MCF 10A (cell line): ENCODE measurements at regions of chr6 and their contacts with region 1.

Region 1: DNA sequence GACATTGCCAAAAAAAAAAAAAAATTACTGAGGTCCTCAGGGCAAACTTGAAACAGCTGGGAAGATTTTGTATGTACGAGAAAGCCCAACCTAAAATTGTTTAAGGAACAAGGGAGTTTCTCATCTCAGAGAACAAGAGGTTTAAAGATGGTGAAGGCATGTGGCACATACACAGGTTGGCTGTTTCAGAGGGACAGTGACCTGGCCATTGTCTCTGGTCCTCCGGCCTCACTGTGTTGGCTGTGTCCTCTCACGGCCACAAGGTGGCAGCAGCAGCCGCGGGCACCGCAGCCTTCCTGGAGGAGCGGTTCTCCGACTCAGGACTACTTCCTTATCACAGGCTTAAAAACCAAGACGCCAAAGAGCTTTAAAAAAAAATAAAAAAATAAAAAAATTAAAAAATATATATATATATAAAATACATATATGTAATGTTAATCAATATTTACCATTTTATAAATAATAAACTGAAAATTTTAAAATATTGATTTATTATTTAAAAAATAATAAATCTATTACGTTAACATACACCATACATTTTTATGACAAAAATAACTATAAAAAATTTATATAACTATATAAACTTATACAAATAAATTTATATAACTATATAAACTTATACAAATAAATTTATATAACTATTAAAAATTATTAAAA is 52.8 kb downstream of the GTF2H5 start:
- DNase-seq: peak; percentile 80
- H3K4me3 Mint-ChIP-seq: no peak overlapping the region
- H3K27ac Mint-ChIP-seq: no peak overlapping the region
- H3K4me1 Mint-ChIP-seq: peaks cover 9% of the 10 kb centered on the region
- H3K27me3 Mint-ChIP-seq: no peaks in the 10 kb centered on the region
- CTCF ChIP-seq: peak; percentile 91

Region 2: DNA sequence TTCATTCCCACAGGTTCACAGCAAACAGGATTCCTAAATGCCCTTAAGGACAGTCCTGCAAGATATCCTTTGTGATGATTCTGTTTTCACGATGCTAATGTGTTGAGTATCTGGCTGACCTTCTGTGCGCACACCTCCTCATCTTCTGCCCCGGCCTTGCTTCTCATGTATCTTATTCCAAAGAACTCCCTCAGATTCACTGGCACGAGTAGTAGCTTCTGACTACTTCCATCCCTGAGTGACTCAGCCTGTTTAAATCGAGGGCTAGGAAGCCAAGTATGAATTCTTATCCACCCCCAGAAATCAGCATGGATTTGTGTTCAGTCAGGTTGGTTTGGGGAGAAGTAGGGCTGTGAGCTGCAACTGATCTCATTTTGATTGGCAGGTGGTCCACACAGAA is 588.1 kb before region 1 on chr6:
- CTCF ChIA-PET with region 1: no interaction called
- POLR2A ChIA-PET with region 1: no interaction called
- intact Hi-C with region 1: no loop called
- DNase-seq: no peak
- H3K4me3 Mint-ChIP-seq: no peak overlapping the region
- H3K27ac Mint-ChIP-seq: no peak overlapping the region
- H3K4me1 Mint-ChIP-seq: no peaks in the 10 kb centered on the region
- H3K27me3 Mint-ChIP-seq: no peaks in the 10 kb centered on the region
- CTCF ChIP-seq: no peak

Region 3: GRCh38 chr6:157693867-157694266 is 527.0 kb before region 1 on chr6:
- CTCF ChIA-PET with region 1: no interaction called
- POLR2A ChIA-PET with region 1: no interaction called
- intact Hi-C with region 1: no loop called
- DNase-seq: no peak
- H3K4me3 Mint-ChIP-seq: no peak overlapping the region
- H3K27ac Mint-ChIP-seq: no peak overlapping the region
- H3K4me1 Mint-ChIP-seq: peaks cover 10% of the 10 kb centered on the region
- H3K27me3 Mint-ChIP-seq: no peaks in the 10 kb centered on the region
- CTCF ChIP-seq: no peak

Region 4: DNA sequence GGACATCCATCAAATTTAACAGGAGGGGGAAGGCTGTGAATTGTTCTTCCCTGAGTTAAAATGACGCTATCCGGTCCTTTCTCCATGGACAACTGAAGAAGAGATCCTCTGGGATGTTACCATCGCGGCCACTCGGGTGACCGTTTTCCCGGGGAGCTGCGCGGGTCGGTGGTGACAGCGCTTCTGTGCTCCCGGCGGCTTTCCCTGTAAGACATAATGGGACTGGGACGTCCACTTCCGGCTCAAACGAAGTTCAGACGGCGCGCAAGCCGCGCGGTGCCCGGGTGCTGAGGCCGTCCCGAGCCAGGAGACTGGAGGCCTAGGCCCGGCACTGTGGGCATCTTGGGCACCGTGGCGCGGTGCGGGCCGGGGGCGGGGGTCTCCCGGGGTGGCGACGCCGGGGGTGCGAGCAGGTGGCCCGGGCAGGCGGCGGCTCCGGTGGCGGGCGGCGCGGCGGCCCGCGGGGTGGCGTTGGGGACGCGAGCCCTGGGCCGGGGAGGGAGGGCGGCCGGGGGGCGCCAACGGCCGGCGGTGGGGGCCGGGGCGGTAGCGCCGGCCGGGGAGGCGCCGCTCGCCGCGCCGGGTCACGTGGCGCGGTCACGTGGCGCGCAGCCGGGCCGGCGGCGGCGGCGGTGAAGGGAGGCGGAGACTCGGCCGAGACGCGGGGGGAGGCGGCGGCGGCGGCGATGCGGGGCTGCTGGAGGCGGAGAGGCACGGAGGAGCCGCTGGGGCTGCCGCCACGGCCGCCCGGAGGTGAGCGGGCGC is 10.8 kb after region 1 on chr6:
- CTCF ChIA-PET with region 1: interaction called, 10 read pairs
- POLR2A ChIA-PET with region 1: interaction called, 9 read pairs
- intact Hi-C with region 1: no loop called
- DNase-seq: peak; percentile 55
- H3K4me3 Mint-ChIP-seq: peak overlapping the region; percentile 88
- H3K27ac Mint-ChIP-seq: peak overlapping the region; percentile 63
- H3K4me1 Mint-ChIP-seq: peaks cover 25% of the 10 kb centered on the region
- H3K27me3 Mint-ChIP-seq: no peaks in the 10 kb centered on the region
- CTCF ChIP-seq: no peak

Region 5: GRCh38 chr6:158255275-158255988 is 34.5 kb after region 1 on chr6:
- CTCF ChIA-PET with region 1: no interaction called
- POLR2A ChIA-PET with region 1: no interaction called
- intact Hi-C with region 1: no loop called
- DNase-seq: no peak
- H3K4me3 Mint-ChIP-seq: no peak overlapping the region
- H3K27ac Mint-ChIP-seq: no peak overlapping the region
- H3K4me1 Mint-ChIP-seq: peaks cover 15% of the 10 kb centered on the region
- H3K27me3 Mint-ChIP-seq: no peaks in the 10 kb centered on the region
- CTCF ChIP-seq: no peak

Region 6: DNA sequence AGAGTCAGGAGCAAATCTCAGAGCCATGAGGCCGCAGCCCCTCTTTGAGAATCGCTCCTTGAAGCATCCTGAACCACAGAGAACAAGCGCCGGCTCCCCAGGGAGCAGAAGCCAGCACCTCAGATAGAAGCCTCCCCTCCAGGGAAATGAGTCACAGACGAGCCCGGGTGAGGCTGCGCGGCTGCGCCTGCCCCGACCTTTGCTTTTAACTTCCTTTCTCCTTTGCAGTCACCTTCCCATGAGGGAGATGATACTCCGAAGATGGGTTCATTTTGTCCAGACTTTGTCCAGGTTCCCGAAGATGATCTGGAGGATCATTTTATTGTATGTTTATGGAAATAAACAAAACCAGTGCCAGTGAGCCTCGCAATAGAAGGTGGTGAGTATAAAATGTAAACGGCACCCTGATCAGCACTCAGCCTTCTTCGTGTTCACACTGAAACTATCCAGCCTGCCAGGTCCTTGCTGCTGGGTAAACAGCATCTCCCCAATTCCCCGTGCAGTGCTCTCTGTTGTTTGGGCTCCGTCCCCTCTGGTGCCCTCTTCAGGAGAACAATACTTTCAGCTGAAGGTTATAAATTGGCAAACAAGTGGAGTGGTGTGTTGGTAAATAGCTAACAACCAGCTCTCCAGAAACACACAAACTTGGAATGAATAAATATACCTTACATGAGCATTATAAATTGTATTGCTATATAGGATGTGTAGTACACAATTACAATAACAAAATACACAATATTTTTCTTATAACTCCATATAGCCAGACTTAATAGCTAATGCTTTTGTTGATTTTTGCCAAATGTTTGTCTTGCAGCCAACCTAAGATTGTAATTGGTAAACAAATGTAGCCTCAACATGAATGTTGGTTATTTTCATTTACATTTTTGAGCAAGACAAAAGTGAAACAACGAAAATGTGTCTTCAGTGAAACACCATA is 297.5 kb after region 1 on chr6:
- CTCF ChIA-PET with region 1: interaction called, 17 read pairs
- POLR2A ChIA-PET with region 1: interaction called, 22 read pairs
- intact Hi-C with region 1: loop called (anchors 1 kb)
- DNase-seq: peak; percentile 89
- H3K4me3 Mint-ChIP-seq: peak overlapping the region; percentile 73
- H3K27ac Mint-ChIP-seq: peak overlapping the region; percentile 82
- H3K4me1 Mint-ChIP-seq: no peaks in the 10 kb centered on the region
- H3K27me3 Mint-ChIP-seq: no peaks in the 10 kb centered on the region
- CTCF ChIP-seq: peak; percentile 60

Region 7: DNA sequence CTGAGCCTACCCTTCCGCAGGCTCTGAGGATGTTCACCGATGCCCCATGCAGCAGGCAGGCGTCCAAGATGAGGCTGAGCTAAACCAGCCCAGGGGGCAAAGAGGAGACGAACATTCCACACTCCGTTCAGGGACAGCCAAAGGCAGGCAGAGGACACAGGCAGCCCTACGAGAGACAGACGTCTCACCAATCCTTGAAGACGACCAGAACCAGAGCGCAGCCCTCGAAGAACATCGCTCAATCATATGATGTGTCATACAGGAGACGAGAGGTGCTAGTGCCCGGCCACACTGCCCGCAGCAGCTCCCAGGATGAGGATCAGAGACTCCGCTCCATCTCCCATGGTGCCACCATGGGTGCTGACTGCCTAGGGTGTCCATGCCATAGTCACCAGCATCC is 303.4 kb after region 1 on chr6:
- CTCF ChIA-PET with region 1: interaction called, 17 read pairs
- POLR2A ChIA-PET with region 1: interaction called, 22 read pairs
- intact Hi-C with region 1: no loop called
- DNase-seq: no peak
- H3K4me3 Mint-ChIP-seq: no peak overlapping the region
- H3K27ac Mint-ChIP-seq: no peak overlapping the region
- H3K4me1 Mint-ChIP-seq: no peaks in the 10 kb centered on the region
- H3K27me3 Mint-ChIP-seq: no peaks in the 10 kb centered on the region
- CTCF ChIP-seq: no peak

Region 8: DNA sequence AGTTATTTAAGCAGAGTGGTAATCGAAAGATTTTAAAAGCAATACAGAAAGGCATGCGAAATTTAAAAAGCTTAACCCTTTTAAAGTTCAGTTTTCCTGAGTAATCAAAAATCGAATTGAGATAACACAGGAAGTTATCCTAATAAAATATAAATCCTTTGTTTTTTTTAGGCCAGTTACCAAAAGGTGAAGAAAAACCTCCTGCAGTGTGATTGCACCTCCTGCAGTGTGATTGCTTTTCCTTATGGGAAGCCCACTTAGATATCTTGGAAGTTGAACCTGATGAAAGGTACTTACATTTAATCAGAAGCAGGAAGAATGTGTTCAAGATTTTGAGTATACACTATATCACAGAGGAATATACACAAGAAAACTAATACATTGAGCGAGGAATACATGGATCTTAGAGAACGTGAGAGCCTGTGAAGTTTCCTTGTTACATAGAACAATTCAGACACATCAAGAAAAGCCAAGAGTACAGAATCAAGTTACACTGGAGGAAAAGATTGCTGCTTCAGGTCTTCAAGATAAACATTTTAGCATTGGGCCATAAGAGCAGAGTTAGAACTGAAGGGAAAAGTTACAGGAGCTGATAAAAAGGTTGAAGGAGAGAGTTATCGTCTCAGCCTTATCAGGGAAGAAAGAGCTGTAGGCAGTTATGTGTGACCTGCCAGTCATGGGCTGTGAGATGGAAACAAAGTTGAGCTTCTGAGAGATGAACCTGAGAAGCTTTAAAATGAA is 331.3 kb after region 1 on chr6:
- CTCF ChIA-PET with region 1: interaction called, 12 read pairs
- POLR2A ChIA-PET with region 1: interaction called, 3 read pairs
- intact Hi-C with region 1: no loop called
- DNase-seq: no peak
- H3K4me3 Mint-ChIP-seq: no peak overlapping the region
- H3K27ac Mint-ChIP-seq: no peak overlapping the region
- H3K4me1 Mint-ChIP-seq: peaks cover 5% of the 10 kb centered on the region
- H3K27me3 Mint-ChIP-seq: peaks cover 32% of the 10 kb centered on the region
- CTCF ChIP-seq: no peak

Region 9: GRCh38 chr6:158605266-158605878 is 384.5 kb after region 1 on chr6:
- CTCF ChIA-PET with region 1: interaction called, 58 read pairs
- POLR2A ChIA-PET with region 1: interaction called, 7 read pairs
- intact Hi-C with region 1: loop called (anchors 1 kb)
- DNase-seq: peak; percentile 65
- H3K4me3 Mint-ChIP-seq: no peak overlapping the region
- H3K27ac Mint-ChIP-seq: no peak overlapping the region
- H3K4me1 Mint-ChIP-seq: no peaks in the 10 kb centered on the region
- H3K27me3 Mint-ChIP-seq: no peaks in the 10 kb centered on the region
- CTCF ChIP-seq: peak; percentile 72

Region 10: GRCh38 chr6:158644231-158645063 is 423.5 kb after region 1 on chr6 and contains the start of gene DYNLT1:
- CTCF ChIA-PET with region 1: interaction called, 4 read pairs
- POLR2A ChIA-PET with region 1: interaction called, 12 read pairs
- intact Hi-C with region 1: no loop called
- DNase-seq: peak; percentile 90
- H3K4me3 Mint-ChIP-seq: peak within 1 kb of the TSS; percentile 93
- H3K27ac Mint-ChIP-seq: peak within 1 kb of the TSS; percentile 94
- H3K4me1 Mint-ChIP-seq: peaks cover 55% of the 10 kb centered on the region
- H3K27me3 Mint-ChIP-seq: no peaks in the 10 kb centered on the region
- CTCF ChIP-seq: no peak
- total RNA-seq, gene DYNLT1: 122 and 156 TPM in 2 replicates

Region 11: GRCh38 chr6:159193923-159194322 is 973.0 kb after region 1 on chr6:
- CTCF ChIA-PET with region 1: no interaction called
- POLR2A ChIA-PET with region 1: no interaction called
- intact Hi-C with region 1: no loop called
- DNase-seq: no peak
- H3K4me3 Mint-ChIP-seq: no peak overlapping the region
- H3K27ac Mint-ChIP-seq: no peak overlapping the region
- H3K4me1 Mint-ChIP-seq: no peaks in the 10 kb centered on the region
- H3K27me3 Mint-ChIP-seq: peaks cover 14% of the 10 kb centered on the region
- CTCF ChIP-seq: no peak